Adrenal gland (tissue), 19 donors: ENCODE measurements at regions of chr17 and their contacts with region 1.

Region 1: DNA sequence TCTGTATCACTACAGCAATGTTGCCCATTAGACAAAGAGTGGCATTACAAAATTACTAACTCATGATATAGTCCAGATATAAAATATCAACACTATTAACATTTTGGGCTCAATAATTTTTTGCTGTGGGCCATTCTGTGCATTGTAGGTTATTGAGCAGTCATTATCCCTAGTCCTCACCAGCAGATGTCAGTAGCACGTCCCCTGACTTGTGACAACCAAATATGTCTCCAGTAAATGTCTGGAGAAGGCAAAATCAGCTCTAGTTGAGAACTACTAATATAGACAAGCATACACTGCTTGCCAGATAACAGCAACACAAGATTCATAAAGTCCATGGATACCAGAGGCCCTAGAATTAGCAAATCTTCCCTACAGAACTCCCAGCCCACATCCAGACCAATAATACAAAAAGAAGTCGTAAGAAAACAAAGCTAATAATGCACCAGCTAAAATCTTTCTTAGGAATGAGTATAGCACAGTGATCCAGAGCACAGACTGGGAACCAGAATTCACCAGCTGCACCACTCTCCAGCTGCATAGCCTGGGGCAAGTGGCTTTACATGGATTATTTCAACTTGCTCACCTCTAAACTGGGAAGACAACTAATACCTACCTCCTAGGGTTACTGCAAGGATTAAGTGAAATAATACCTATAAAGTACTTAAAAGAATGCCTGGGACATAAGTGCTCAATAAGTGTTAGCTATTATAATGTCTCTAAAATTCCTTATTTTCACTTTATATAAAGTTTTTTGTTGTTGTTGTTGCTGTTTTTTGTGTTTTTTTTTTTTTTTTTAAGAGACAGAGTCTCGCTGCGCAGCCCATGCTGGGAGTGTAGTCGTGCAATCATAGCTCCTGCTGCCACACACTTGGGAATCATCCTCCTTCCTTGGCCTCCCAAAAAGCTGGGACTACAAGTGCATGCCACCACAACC is 23.7 kb downstream of the HELZ start:
- DNase-seq: peak in 3 of 7 donors; percentile 35 to 68 (median 48)
- H3K4me3 ChIP-seq: no peak overlapping the region
- H3K27ac ChIP-seq: no peak overlapping the region
- H3K4me1 ChIP-seq: peaks cover 12 to 28% of the 10 kb centered on the region in 2 donors
- H3K27me3 ChIP-seq: no peaks in the 10 kb centered on the region
- CTCF ChIP-seq: peak; percentile 15 to 64 (median 48)
- POLR2A ChIP-seq: no peak

Region 2: GRCh38 chr17:67281053-67281452 is 59.7 kb after region 1 on chr17:
- intact Hi-C with region 1: no loop called
- DNase-seq: no peak
- H3K4me3 ChIP-seq: no peak overlapping the region
- H3K27ac ChIP-seq: no peak overlapping the region
- H3K4me1 ChIP-seq: no peaks in the 10 kb centered on the region
- H3K27me3 ChIP-seq: no peaks in the 10 kb centered on the region
- CTCF ChIP-seq: no peak
- POLR2A ChIP-seq: no peak

Region 3: GRCh38 chr17:67293251-67294203 is 72.2 kb after region 1 on chr17:
- intact Hi-C with region 1: loop called in 1 of 2 experiments (anchors 5 kb)
- DNase-seq: peak; percentile 59 to 85 (median 72)
- H3K4me3 ChIP-seq: peak overlapping the region in 1 of 4 donors; percentile 16
- H3K27ac ChIP-seq: no peak overlapping the region
- H3K4me1 ChIP-seq: peaks cover 4 to 12% of the 10 kb centered on the region in 2 donors
- H3K27me3 ChIP-seq: no peaks in the 10 kb centered on the region
- CTCF ChIP-seq: peak; percentile 60 to 91 (median 82)
- POLR2A ChIP-seq: no peak